ENCODE measurements at regions of chr11 and their contacts with region 1.

Region 1: DNA sequence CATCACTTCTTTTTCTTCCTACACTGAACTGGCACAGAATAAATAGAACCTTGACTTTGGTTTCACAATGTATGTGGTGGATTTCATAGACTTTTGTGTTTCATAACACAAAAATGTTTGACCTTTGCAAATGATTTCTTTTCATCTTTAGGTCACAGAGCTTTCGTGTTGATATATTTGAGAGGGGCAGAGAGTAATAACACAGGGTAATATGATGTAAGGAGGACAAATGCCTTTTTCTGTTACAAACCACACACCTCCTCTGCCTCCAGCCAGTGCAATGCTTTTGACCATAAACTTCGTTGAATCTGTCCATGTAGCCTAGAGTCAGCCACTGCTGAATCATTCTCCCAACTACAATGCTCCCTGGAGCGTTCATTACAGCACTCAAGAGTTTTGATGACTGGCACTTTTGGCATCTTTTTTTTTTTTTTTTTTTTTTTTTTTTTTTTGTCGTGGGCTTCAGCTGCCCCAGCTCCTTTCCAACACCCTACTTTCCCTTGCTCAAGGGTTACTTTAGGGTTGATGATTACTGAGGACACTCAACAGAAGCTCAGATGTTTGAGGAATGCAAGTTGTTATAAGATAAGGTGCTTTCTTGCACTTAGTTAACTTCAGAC is 11.4 kb upstream of the CAT start:
- DNase-seq: peak; percentile 94
- ATAC-seq: peak; percentile 98
- H3K4me3 ChIP-seq: no peak overlapping the region; a peak in 1 of 6 replicates
- H3K27ac ChIP-seq: peak overlapping the region; percentile 34
- H3K4me1 ChIP-seq: peaks cover 36% of the 10 kb centered on the region
- H3K27me3 ChIP-seq: no peaks in the 10 kb centered on the region
- CTCF ChIP-seq: no peak
- EP300 ChIP-seq: peak; percentile 43 to 94
- POLR2A ChIP-seq: no peak
- RAD21 ChIP-seq: no peak

Region 2: GRCh38 chr11:34288492-34288891 is 138.8 kb before region 1 on chr11:
- CTCF ChIA-PET with region 1: no interaction called
- POLR2A ChIA-PET with region 1: no interaction called
- in situ Hi-C with region 1: no loop called
- intact Hi-C with region 1: no loop called
- DNase-seq: no peak
- ATAC-seq: peak; percentile 34; the same call in 2 of the 3 replicates
- H3K4me3 ChIP-seq: no peak overlapping the region
- H3K27ac ChIP-seq: no peak overlapping the region
- H3K4me1 ChIP-seq: peaks cover 17% of the 10 kb centered on the region
- H3K27me3 ChIP-seq: no peaks in the 10 kb centered on the region
- CTCF ChIP-seq: no peak
- EP300 ChIP-seq: no peak
- POLR2A ChIP-seq: no peak
- RAD21 ChIP-seq: no peak

Region 3: GRCh38 chr11:34380696-34381095 is 46.6 kb before region 1 on chr11:
- CTCF ChIA-PET with region 1: no interaction called
- POLR2A ChIA-PET with region 1: no interaction called
- in situ Hi-C with region 1: no loop called
- intact Hi-C with region 1: loop called (anchors 1 kb)
- DNase-seq: peak; percentile 31
- ATAC-seq: no peak
- H3K4me3 ChIP-seq: no peak overlapping the region
- H3K27ac ChIP-seq: no peak overlapping the region
- H3K4me1 ChIP-seq: peaks cover 10% of the 10 kb centered on the region
- H3K27me3 ChIP-seq: no peaks in the 10 kb centered on the region
- CTCF ChIP-seq: no peak
- EP300 ChIP-seq: peak in 1 of 2 experiments; percentile 77; a peak in 2 of 4 replicates
- POLR2A ChIP-seq: no peak
- RAD21 ChIP-seq: no peak

Region 4: DNA sequence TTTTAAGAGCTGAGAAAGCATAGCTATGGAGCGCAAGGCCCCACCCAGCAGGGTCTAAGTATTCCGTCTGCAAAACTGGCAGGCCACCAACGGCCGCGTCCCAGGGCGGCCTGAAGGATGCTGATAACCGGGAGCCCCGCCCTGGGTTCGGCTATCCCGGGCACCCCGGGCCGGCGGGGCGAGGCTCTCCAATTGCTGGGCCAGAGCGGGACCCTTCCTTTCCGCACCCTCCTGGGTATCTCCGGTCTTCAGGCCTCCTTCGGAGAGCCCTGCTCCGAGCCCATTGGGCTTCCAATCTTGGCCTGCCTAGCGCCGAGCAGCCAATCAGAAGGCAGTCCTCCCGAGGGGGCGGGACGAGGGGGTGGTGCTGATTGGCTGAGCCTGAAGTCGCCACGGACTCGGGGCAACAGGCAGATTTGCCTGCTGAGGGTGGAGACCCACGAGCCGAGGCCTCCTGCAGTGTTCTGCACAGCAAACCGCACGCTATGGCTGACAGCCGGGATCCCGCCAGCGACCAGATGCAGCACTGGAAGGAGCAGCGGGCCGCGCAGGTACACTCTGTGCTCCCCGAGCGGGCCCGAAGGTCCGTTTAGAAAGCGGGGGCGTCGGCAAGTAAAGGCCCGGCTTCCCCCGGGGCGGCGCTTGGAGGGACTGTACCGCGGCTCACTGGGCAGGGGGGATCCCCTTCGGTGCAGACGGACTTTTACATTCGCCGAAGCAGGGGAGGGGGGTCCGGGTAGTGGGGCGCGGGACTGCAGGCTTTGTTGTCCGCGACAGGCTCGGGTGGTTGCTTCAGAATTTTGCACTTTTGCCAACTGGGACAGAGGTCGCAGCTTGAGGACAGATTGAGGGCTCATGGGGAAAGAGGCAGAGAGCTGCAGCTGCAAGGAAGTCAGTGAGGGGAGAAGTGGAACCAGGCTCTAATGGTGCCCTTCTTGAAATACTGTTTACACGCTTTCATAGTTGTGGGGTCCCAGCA is 11.5 kb after region 1 on chr11 and contains the start of gene CAT:
- CTCF ChIA-PET with region 1: no interaction called
- POLR2A ChIA-PET with region 1: interaction called, 12 read pairs
- in situ Hi-C with region 1: no loop called
- intact Hi-C with region 1: no loop called
- DNase-seq: peak; percentile 92
- ATAC-seq: peak; percentile 95
- H3K4me3 ChIP-seq: peak within 1 kb of the TSS; percentile 64 to 88 (median 84)
- H3K27ac ChIP-seq: peak within 1 kb of the TSS; percentile 92
- H3K4me1 ChIP-seq: peaks cover 58% of the 10 kb centered on the region
- H3K27me3 ChIP-seq: no peaks in the 10 kb centered on the region; a peak in 1 of 5 replicates
- CTCF ChIP-seq: 0 out of 2 replicates have a peak, but pooled peaks have one; percentile 9
- EP300 ChIP-seq: peak in 1 of 2 experiments; percentile 21; a peak in 1 of 4 replicates
- POLR2A ChIP-seq: peak; percentile 83 to 95
- RAD21 ChIP-seq: no peak
- total RNA-seq, gene CAT: 136 and 180 TPM in 2 replicates

Region 5: DNA sequence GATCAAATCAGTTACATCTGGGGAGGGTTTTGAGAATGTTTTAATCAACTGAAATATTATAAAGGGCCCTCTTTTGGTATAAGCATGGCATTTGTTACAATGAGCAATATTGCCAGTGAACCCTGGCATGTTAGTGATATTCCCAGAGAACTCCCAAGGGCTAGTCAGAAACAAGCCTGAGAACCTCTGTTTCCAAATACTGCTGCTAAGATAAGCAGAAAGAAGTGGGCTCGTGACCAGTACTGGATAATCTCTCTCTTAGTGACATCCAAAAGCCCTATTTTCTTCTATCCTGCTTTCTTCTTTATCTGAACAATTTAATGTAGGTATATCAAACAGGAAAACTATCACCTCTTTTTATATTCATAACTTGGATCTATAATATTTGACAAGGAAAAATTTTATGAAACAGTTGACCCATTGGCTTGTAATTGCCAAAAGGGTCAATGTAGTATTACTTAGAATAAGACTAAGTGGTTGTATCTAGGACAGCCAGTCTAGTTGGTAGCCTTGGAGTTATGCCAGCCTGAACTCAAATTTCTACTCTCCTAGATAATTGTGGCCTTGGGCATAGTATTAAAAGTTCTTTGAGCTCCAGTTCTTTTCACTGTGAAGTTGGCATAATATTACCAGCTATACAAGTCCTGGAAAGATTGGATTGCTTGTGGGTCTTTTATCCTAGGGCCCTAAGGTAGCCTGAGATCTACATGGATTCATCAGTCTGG is 27.2 kb after region 1 on chr11:
- CTCF ChIA-PET with region 1: no interaction called
- POLR2A ChIA-PET with region 1: no interaction called
- in situ Hi-C with region 1: no loop called
- intact Hi-C with region 1: no loop called
- DNase-seq: no peak
- ATAC-seq: no peak
- H3K4me3 ChIP-seq: no peak overlapping the region
- H3K27ac ChIP-seq: no peak overlapping the region
- H3K4me1 ChIP-seq: peaks cover 24% of the 10 kb centered on the region
- H3K27me3 ChIP-seq: no peaks in the 10 kb centered on the region
- CTCF ChIP-seq: no peak
- EP300 ChIP-seq: no peak
- POLR2A ChIP-seq: no peak
- RAD21 ChIP-seq: no peak

Region 6: GRCh38 chr11:34468209-34468841 is 41.0 kb after region 1 on chr11:
- CTCF ChIA-PET with region 1: no interaction called
- POLR2A ChIA-PET with region 1: interaction called, 10 read pairs
- in situ Hi-C with region 1: no loop called
- intact Hi-C with region 1: no loop called
- DNase-seq: peak; percentile 30
- ATAC-seq: peak; percentile 54
- H3K4me3 ChIP-seq: no peak overlapping the region
- H3K27ac ChIP-seq: no peak overlapping the region
- H3K4me1 ChIP-seq: peaks cover 16% of the 10 kb centered on the region
- H3K27me3 ChIP-seq: no peaks in the 10 kb centered on the region
- CTCF ChIP-seq: peak; percentile 72
- EP300 ChIP-seq: no peak
- POLR2A ChIP-seq: no peak
- RAD21 ChIP-seq: peak; percentile 72

Region 7: DNA sequence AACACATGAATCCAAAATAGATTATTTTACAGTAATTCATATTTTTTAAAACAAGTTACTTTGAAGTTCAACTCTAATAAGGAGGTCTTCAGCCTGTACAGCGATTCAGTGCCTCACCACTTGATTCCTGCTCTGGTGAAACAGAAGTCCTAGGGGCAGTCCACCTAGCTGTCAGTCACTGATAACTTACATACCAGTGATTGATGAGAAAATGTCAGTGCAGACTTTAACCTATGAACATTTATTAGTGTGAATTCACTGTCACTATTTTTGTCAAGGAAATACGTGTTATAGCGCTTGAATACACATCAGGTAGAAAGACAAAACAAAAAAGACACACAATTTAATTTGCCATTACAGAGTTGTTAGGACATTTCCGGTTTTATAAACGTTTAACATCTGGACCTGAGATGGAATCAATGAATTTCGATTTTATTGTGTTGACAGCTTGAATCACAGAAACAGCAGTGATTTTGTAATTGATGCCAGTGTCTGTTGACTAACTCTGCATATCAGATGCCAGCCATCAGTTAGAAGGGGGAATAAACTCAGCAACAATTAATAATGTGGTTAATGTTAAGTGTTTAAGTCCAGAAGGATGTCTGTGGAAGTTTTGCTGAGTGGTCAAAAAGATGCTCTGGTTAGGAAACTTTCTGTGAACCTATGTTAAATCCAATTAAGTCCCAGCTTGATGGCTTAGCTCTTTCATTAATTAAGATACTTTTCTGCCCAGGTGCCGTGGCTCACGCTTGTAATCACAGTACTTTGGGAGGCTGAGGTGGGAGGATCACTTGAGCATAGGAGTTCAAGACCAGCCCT is 51.8 kb after region 1 on chr11:
- CTCF ChIA-PET with region 1: no interaction called
- POLR2A ChIA-PET with region 1: no interaction called
- in situ Hi-C with region 1: no loop called
- intact Hi-C with region 1: no loop called
- DNase-seq: no peak
- ATAC-seq: peak; percentile 49; the same call in 2 of the 3 replicates
- H3K4me3 ChIP-seq: no peak overlapping the region
- H3K27ac ChIP-seq: no peak overlapping the region
- H3K4me1 ChIP-seq: peaks cover 26% of the 10 kb centered on the region
- H3K27me3 ChIP-seq: no peaks in the 10 kb centered on the region
- CTCF ChIP-seq: no peak
- EP300 ChIP-seq: no peak
- POLR2A ChIP-seq: no peak
- RAD21 ChIP-seq: no peak

Region 8: GRCh38 chr11:34525887-34526636 is 98.8 kb after region 1 on chr11:
- CTCF ChIA-PET with region 1: no interaction called
- POLR2A ChIA-PET with region 1: no interaction called
- in situ Hi-C with region 1: no loop called
- intact Hi-C with region 1: no loop called
- DNase-seq: no peak
- ATAC-seq: no peak
- H3K4me3 ChIP-seq: no peak overlapping the region
- H3K27ac ChIP-seq: no peak overlapping the region
- H3K4me1 ChIP-seq: peaks cover 55% of the 10 kb centered on the region
- H3K27me3 ChIP-seq: peaks cover 4 to 28% of the 10 kb centered on the region in 2 experiments
- CTCF ChIP-seq: no peak
- EP300 ChIP-seq: no peak
- POLR2A ChIP-seq: no peak
- RAD21 ChIP-seq: no peak

Measured in HepG2 (cell line).